AG04449 (cell line): ENCODE measurements at regions of chr6 and their contacts with region 1.

Region 1: GRCh38 chr6:54717849-54718455 is 128.6 kb upstream of the FAM83B start:
- DNase-seq: no peak
- H3K4me3 ChIP-seq: no peak overlapping the region
- CTCF ChIP-seq: peak; percentile 79

Region 2: GRCh38 chr6:54681987-54682386 is 36.0 kb before region 1 on chr6:
- CTCF ChIA-PET with region 1: interaction called, 18 read pairs
- POLR2A ChIA-PET with region 1: no interaction called
- DNase-seq: no peak
- H3K4me3 ChIP-seq: no peak overlapping the region
- CTCF ChIP-seq: no peak

Region 3: GRCh38 chr6:54697424-54697823 is 20.5 kb before region 1 on chr6:
- CTCF ChIA-PET with region 1: interaction called, 30 read pairs
- POLR2A ChIA-PET with region 1: no interaction called
- DNase-seq: no peak
- H3K4me3 ChIP-seq: no peak overlapping the region
- CTCF ChIP-seq: peak; percentile 25

Region 4: GRCh38 chr6:54737247-54737646 is 19.3 kb after region 1 on chr6:
- CTCF ChIA-PET with region 1: interaction called, 27 read pairs
- POLR2A ChIA-PET with region 1: no interaction called
- DNase-seq: no peak
- H3K4me3 ChIP-seq: no peak overlapping the region
- CTCF ChIP-seq: peak; percentile 6

Region 5: GRCh38 chr6:55069132-55069781 is 351.3 kb after region 1 on chr6:
- CTCF ChIA-PET with region 1: interaction called, 38 read pairs
- POLR2A ChIA-PET with region 1: no interaction called
- DNase-seq: no peak
- H3K4me3 ChIP-seq: no peak overlapping the region
- CTCF ChIP-seq: peak; percentile 59

Region 6: DNA sequence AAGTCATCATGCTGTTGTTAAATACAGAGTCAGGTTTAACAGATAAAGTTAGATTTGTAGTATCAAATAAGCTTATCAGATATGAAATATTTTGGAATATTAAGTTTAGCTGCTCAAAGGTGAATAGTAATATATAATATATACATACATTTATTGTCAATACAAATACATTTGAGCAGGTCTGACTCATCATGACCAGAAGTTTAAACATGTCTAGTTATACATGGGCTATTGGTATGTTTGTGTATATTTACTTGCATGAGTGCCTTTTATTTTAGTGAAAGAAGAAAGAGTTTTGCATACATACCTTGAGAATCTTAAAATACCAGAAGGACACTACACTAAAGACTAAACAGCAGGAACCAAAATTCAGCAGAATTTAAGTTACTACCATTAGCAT is 1080.6 kb after region 1 on chr6:
- CTCF ChIA-PET with region 1: no interaction called
- POLR2A ChIA-PET with region 1: no interaction called
- DNase-seq: no peak
- H3K4me3 ChIP-seq: no peak overlapping the region
- CTCF ChIP-seq: no peak